ENCODE measurements at regions of chr1 and their contacts with region 1.

Region 1: DNA sequence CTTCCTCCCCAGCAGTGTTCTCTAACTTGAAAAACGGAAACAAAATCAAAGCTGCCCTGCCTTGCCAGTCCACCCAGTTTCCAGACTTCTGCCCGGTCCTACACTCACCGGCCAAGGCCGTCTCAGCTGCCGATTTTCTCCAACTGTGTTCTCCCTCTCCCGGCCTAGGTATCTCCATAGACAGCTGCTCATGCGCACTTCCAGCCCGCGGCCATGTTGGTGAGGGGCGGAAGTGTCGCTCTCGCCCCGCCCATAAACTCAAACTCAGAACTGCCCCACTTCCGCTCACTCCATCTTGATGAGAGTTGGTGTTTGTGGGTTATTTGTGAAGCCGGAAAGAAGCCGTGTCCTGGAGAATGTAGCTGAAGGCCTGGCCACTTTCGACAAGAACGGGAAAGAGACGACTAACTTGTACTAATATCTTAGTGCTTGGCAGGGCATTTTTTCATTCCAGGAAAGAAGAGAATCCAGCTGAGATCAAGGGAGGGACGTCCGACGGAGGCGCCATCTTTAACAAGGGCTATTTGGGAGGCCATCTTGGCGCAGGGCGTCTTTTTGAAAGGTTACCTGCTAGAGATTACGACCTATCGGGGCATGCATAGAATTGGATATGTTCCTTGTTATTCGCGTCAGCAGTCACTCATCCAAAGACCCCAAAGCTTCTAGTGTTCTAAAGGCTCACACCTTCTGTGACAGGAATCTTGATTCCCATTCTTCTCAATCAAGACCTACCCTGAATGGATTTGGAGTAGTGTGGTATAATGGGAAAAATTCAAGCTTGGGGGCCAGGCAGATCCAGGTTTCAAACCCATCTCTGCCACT is at the start of gene USF1:
- DNase-seq: peak; percentile 86 to 97 (median 92)
- ATAC-seq: peak; percentile 82
- H3K4me3 ChIP-seq: peak within 1 kb of the TSS; percentile 98
- H3K4me3 Mint-ChIP-seq: peak within 1 kb of the TSS; percentile 93
- H3K27ac ChIP-seq: peak within 1 kb of the TSS; percentile 90 to 96
- H3K27ac Mint-ChIP-seq: peak within 1 kb of the TSS; percentile 94
- H3K4me1 ChIP-seq: peaks cover 52% of the 10 kb centered on the region
- H3K4me1 Mint-ChIP-seq: peaks cover 43% of the 10 kb centered on the region
- H3K27me3 ChIP-seq: no peaks in the 10 kb centered on the region
- H3K27me3 Mint-ChIP-seq: no peaks in the 10 kb centered on the region
- CTCF ChIP-seq: no peak
- total RNA-seq, gene USF1: 93.5 to 99.1 TPM

Region 2: GRCh38 chr1:161013488-161014230 is 32.3 kb before region 1 on chr1:
- CTCF ChIA-PET with region 1: interaction called, 4 read pairs
- POLR2A ChIA-PET with region 1: interaction called, 27 read pairs
- intact Hi-C with region 1: no loop called
- DNase-seq: peak; percentile 32 to 88 (median 62)
- ATAC-seq: peak; percentile 93
- H3K4me3 ChIP-seq: peak overlapping the region; percentile 51
- H3K4me3 Mint-ChIP-seq: peak overlapping the region; percentile 84
- H3K27ac ChIP-seq: peak overlapping the region; percentile 56 to 87
- H3K27ac Mint-ChIP-seq: peak overlapping the region; percentile 94
- H3K4me1 ChIP-seq: peaks cover 32% of the 10 kb centered on the region
- H3K4me1 Mint-ChIP-seq: peaks cover 29% of the 10 kb centered on the region
- H3K27me3 ChIP-seq: no peaks in the 10 kb centered on the region
- H3K27me3 Mint-ChIP-seq: no peaks in the 10 kb centered on the region
- CTCF ChIP-seq: no peak

Region 3: GRCh38 chr1:161098210-161099068 is 52.5 kb after region 1 on chr1 and contains the start of gene KLHDC9:
- CTCF ChIA-PET with region 1: interaction called, 66 read pairs
- POLR2A ChIA-PET with region 1: interaction called, 62 read pairs
- intact Hi-C with region 1: loop called (anchors 1 kb)
- DNase-seq: peak; percentile 38 to 88 (median 58)
- ATAC-seq: peak; percentile 50
- H3K4me3 ChIP-seq: peak within 1 kb of the TSS; percentile 51
- H3K4me3 Mint-ChIP-seq: peak within 1 kb of the TSS; percentile 87
- H3K27ac ChIP-seq: peak within 1 kb of the TSS in 1 of 2 donors; percentile 52
- H3K27ac Mint-ChIP-seq: peak within 1 kb of the TSS; percentile 90
- H3K4me1 ChIP-seq: peaks cover 22% of the 10 kb centered on the region
- H3K4me1 Mint-ChIP-seq: peaks cover 23% of the 10 kb centered on the region
- H3K27me3 ChIP-seq: no peaks in the 10 kb centered on the region
- H3K27me3 Mint-ChIP-seq: peaks cover 6% of the 10 kb centered on the region
- CTCF ChIP-seq: peak; percentile 29
- total RNA-seq, gene KLHDC9: 0.41 TPM in 1 of 2 experiments, not detected in the other

Region 4: GRCh38 chr1:161132410-161133219 is 86.7 kb after region 1 on chr1 and contains the start of gene DEDD:
- CTCF ChIA-PET with region 1: no interaction called
- POLR2A ChIA-PET with region 1: interaction called, 20 read pairs
- intact Hi-C with region 1: loop called in 1 of 2 experiments (anchors 1 kb)
- DNase-seq: peak; percentile 80 to 97 (median 86)
- ATAC-seq: peak; percentile 95
- H3K4me3 ChIP-seq: peak within 1 kb of the TSS; percentile 98
- H3K4me3 Mint-ChIP-seq: no peak within 1 kb of the TSS
- H3K27ac ChIP-seq: peak within 1 kb of the TSS; percentile 79 to 94
- H3K27ac Mint-ChIP-seq: no peak within 1 kb of the TSS
- H3K4me1 ChIP-seq: peaks cover 46% of the 10 kb centered on the region
- H3K4me1 Mint-ChIP-seq: peaks cover 41% of the 10 kb centered on the region
- H3K27me3 ChIP-seq: no peaks in the 10 kb centered on the region
- H3K27me3 Mint-ChIP-seq: no peaks in the 10 kb centered on the region
- CTCF ChIP-seq: no peak
- total RNA-seq, gene DEDD: 35.5 to 36.6 TPM

Region 5: DNA sequence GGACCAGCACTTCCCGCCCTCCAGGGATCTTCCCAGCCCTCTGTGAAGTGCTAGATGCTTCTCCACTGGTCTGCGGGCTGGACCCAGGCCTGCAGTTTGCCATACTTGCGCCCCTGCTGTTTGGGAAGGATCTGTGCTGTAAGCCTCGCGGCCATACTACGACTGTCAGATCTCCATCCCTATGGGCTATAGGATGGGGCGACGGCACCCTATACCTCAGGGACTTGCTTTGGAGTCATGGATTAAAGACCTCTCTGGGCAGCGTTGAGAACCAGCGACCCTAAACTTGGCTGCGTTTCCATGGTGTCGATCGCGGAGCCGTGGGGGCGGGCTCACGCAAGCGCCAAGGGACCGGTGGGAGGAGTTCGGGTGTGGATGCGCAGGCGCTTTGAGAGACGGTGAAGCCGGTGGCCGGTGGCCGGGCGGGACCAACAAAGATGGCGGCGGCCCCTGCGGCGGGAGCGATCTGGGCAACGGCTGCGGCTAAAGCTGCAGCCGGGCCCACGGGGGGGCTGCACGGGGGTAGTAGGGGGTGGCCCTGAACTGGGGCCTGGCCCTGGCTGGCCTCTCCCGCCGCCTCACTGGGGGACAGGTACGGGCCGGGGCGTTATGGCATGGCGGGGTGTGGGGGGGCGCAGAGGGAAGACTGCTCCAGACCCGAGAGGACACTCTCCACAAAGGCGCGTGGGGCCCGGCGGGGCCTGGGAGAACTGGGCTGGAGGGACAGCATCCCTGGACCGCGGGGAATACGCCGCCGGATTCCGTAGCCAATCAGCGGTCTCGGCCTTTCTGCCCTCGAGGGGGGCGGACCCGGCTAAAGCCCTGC is 113.3 kb after region 1 on chr1 and contains the start of gene USP21:
- CTCF ChIA-PET with region 1: no interaction called
- POLR2A ChIA-PET with region 1: interaction called, 4 read pairs
- intact Hi-C with region 1: loop called (anchors 5 kb)
- DNase-seq: peak; percentile 89 to 96 (median 90)
- ATAC-seq: peak; percentile 97
- H3K4me3 ChIP-seq: peak within 1 kb of the TSS; percentile 98
- H3K4me3 Mint-ChIP-seq: peak within 1 kb of the TSS; percentile 93
- H3K27ac ChIP-seq: peak within 1 kb of the TSS; percentile 70 to 91
- H3K27ac Mint-ChIP-seq: peak within 1 kb of the TSS; percentile 86
- H3K4me1 ChIP-seq: peaks cover 44% of the 10 kb centered on the region
- H3K4me1 Mint-ChIP-seq: peaks cover 80% of the 10 kb centered on the region
- H3K27me3 ChIP-seq: no peaks in the 10 kb centered on the region
- H3K27me3 Mint-ChIP-seq: no peaks in the 10 kb centered on the region
- CTCF ChIP-seq: no peak
- total RNA-seq, gene USP21: 44.4 to 45.6 TPM

Region 6: GRCh38 chr1:161314201-161314981 is 268.4 kb after region 1 on chr1 and contains the start of gene SDHC:
- CTCF ChIA-PET with region 1: no interaction called
- POLR2A ChIA-PET with region 1: interaction called, 10 read pairs
- intact Hi-C with region 1: no loop called
- DNase-seq: peak; percentile 84 to 96 (median 90)
- ATAC-seq: peak; percentile 98
- H3K4me3 ChIP-seq: peak within 1 kb of the TSS; percentile 90
- H3K4me3 Mint-ChIP-seq: peak within 1 kb of the TSS; percentile 98
- H3K27ac ChIP-seq: peak within 1 kb of the TSS; percentile 94 to 97
- H3K27ac Mint-ChIP-seq: peak within 1 kb of the TSS; percentile 100
- H3K4me1 ChIP-seq: peaks cover 18% of the 10 kb centered on the region
- H3K4me1 Mint-ChIP-seq: peaks cover 30% of the 10 kb centered on the region
- H3K27me3 ChIP-seq: no peaks in the 10 kb centered on the region
- H3K27me3 Mint-ChIP-seq: no peaks in the 10 kb centered on the region
- CTCF ChIP-seq: no peak
- total RNA-seq, gene SDHC: 33.0 to 37.2 TPM

Measured in CD4-positive, alpha-beta T cell (primary cell).